ENCODE measurements at regions of chr17 and their contacts with region 1.

Region 1: DNA sequence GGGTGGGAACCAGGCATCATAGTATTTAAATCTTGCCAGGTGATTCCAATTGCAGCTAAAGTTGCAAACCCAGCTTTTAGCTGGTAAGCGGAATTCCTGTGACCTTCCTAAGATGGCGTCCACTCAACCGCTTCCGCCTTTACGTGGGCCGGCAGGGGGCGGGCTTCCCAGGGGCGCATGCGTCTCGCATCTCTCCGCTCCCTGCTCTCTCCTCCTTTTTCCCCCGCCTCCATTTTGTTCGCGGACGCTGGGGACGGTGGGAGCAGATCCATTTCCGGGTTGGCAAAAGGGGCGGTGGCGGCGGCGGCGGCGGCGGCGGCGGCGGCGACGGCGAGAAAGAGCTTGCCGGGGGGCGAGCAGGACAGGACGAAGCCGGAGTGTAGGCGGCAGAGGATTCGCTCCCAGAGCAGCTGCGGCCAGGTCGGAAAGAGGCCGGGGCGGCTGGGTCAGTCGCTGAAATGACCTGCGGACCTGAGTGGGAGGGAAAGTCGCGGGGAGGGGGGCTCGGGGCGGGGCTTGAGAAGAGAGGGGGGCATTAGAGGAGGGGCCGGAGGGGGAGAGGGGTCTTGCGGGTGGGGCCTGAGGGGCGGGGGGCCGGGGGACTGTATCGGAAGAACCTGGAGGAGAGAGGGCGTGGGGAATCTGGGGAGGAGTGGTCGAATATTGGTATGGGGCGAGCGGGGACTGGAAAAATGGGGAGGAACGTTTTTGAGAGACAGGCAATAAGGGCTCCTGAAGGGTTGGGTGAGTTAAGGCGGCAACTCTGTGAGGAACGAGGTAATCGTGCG is at the start of gene WIPF2:
- DNase-seq: peak; percentile 98
- ATAC-seq: peak; percentile 95
- H3K4me3 Mint-ChIP-seq: peak within 1 kb of the TSS; percentile 82
- H3K27ac Mint-ChIP-seq: peak within 1 kb of the TSS; percentile 99
- H3K4me1 Mint-ChIP-seq: peaks cover 22% of the 10 kb centered on the region
- H3K27me3 Mint-ChIP-seq: no peaks in the 10 kb centered on the region
- total RNA-seq, gene WIPF2: 22.0 to 27.4 TPM

Region 2: GRCh38 chr17:40287494-40288369 is 68.5 kb after region 1 on chr17 and contains the start of gene CDC6:
- CTCF ChIA-PET with region 1: interaction called, 22 read pairs
- POLR2A ChIA-PET with region 1: interaction called, 19 read pairs
- DNase-seq: peak; percentile 100
- ATAC-seq: peak; percentile 96
- H3K4me3 Mint-ChIP-seq: peak within 1 kb of the TSS; percentile 98
- H3K27ac Mint-ChIP-seq: peak within 1 kb of the TSS; percentile 97
- H3K4me1 Mint-ChIP-seq: peaks cover 45% of the 10 kb centered on the region
- H3K27me3 Mint-ChIP-seq: no peaks in the 10 kb centered on the region
- total RNA-seq, gene CDC6: 103 to 110 TPM